Endothelial cell of umbilical vein (primary cell): ENCODE measurements at regions of chr5 and their contacts with region 1.

Region 1: GRCh38 chr5:137888857-137889759 is at the start of gene PKD2L2:
- DNase-seq: peak; percentile 82
- H3K4me3 ChIP-seq: peak within 1 kb of the TSS in 2 of 3 experiments; percentile 25 to 53
- H3K27ac ChIP-seq: peak within 1 kb of the TSS; percentile 9
- H3K4me1 ChIP-seq: peaks cover 13% of the 10 kb centered on the region
- H3K27me3 ChIP-seq: no peaks in the 10 kb centered on the region
- CTCF ChIP-seq: peak in 1 of 2 donors; percentile 13
- POLR2A ChIP-seq: no peak
- total RNA-seq, gene PKD2L2: not detected in 2 replicates

Region 2: GRCh38 chr5:137997726-137998213 is 108.7 kb after region 1 on chr5:
- CTCF ChIA-PET with region 1: no interaction called
- POLR2A ChIA-PET with region 1: no interaction called
- dilution Hi-C with region 1: no loop called
- intact Hi-C with region 1: loop called (anchors 5 kb)
- DNase-seq: peak; percentile 6
- H3K4me3 ChIP-seq: no peak overlapping the region
- H3K27ac ChIP-seq: no peak overlapping the region
- H3K4me1 ChIP-seq: peaks cover 16% of the 10 kb centered on the region
- H3K27me3 ChIP-seq: no peaks in the 10 kb centered on the region
- CTCF ChIP-seq: no peak
- POLR2A ChIP-seq: no peak

Region 3: GRCh38 chr5:138289296-138289695 is 400.2 kb after region 1 on chr5:
- CTCF ChIA-PET with region 1: no interaction called
- POLR2A ChIA-PET with region 1: no interaction called
- dilution Hi-C with region 1: no loop called
- intact Hi-C with region 1: no loop called
- DNase-seq: no peak
- H3K4me3 ChIP-seq: no peak overlapping the region
- H3K27ac ChIP-seq: no peak overlapping the region
- H3K4me1 ChIP-seq: no peaks in the 10 kb centered on the region
- H3K27me3 ChIP-seq: no peaks in the 10 kb centered on the region
- CTCF ChIP-seq: no peak
- POLR2A ChIP-seq: no peak